ENCODE measurements at regions of chr1 and their contacts with region 1.

Region 1: GRCh38 chr1:24150234-24151174 is 7.6 kb upstream of the IL22RA1 start:
- DNase-seq: peak; percentile 92 to 93
- H3K4me3 ChIP-seq: peak overlapping the region; percentile 25
- H3K4me3 Mint-ChIP-seq: peak overlapping the region; percentile 66
- H3K27ac Mint-ChIP-seq: peak overlapping the region; percentile 86
- H3K4me1 ChIP-seq: peaks cover 13% of the 10 kb centered on the region
- H3K4me1 Mint-ChIP-seq: peaks cover 16% of the 10 kb centered on the region
- H3K27me3 ChIP-seq: no peaks in the 10 kb centered on the region
- H3K27me3 Mint-ChIP-seq: no peaks in the 10 kb centered on the region
- CTCF ChIP-seq: peak; percentile 79 to 81

Region 2: DNA sequence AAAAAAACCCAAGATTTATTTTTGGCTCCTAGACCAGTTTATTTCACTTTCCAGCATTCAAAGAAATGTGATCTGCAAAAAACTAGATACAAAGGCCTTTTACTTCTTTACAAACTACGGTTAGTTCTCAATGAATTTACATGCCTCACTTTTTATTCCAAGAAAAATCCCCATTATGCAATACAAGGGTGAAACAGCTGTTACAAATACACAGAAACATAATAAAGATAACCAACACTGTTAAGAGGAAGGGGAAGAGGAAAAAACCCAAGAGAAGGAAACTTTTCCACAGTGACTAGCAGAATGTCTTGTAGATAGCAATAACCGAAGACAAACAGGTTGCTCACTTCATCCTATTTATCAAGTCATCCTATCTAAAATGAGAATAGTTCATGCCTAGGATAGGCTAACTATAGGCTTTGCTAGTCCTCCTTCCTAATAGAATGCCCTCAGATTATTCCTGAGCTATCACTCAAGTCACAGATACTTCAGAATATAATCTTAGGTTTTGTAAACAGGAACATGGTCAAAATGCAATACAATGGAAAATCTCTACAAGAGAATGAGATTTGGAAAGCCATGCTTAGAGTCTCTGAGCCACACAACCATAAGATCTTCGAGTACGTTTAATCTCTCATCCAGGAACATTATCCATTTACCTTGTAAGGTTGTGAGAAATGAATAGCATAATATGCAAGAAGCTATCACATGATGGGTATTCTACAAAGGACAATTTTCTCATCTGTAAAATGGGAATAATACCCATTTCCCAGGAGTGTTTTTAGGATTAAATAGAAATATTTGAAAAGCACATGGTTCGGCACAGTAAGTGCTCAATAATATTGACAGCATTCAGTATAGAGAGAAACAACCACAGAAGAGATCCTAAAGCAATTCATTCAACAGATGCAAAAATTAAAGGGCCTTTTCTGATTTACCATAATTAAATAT is 185.4 kb before region 1 on chr1:
- CTCF ChIA-PET with region 1: no interaction called
- POLR2A ChIA-PET with region 1: no interaction called
- intact Hi-C with region 1: no loop called
- DNase-seq: no peak
- H3K4me3 ChIP-seq: no peak overlapping the region
- H3K4me3 Mint-ChIP-seq: no peak overlapping the region
- H3K27ac Mint-ChIP-seq: no peak overlapping the region
- H3K4me1 ChIP-seq: peaks cover 12% of the 10 kb centered on the region; the same call in 1 of the 2 replicates
- H3K4me1 Mint-ChIP-seq: no peaks in the 10 kb centered on the region
- H3K27me3 ChIP-seq: no peaks in the 10 kb centered on the region
- H3K27me3 Mint-ChIP-seq: no peaks in the 10 kb centered on the region
- CTCF ChIP-seq: no peak

Region 3: GRCh38 chr1:24070821-24071393 is 79.6 kb before region 1 on chr1:
- CTCF ChIA-PET with region 1: interaction called, 11 read pairs
- POLR2A ChIA-PET with region 1: interaction called, 8 read pairs
- intact Hi-C with region 1: no loop called
- DNase-seq: peak; percentile 79 to 85
- H3K4me3 ChIP-seq: no peak overlapping the region
- H3K4me3 Mint-ChIP-seq: no peak overlapping the region
- H3K27ac Mint-ChIP-seq: no peak overlapping the region
- H3K4me1 ChIP-seq: no peaks in the 10 kb centered on the region
- H3K4me1 Mint-ChIP-seq: no peaks in the 10 kb centered on the region
- H3K27me3 ChIP-seq: no peaks in the 10 kb centered on the region
- H3K27me3 Mint-ChIP-seq: no peaks in the 10 kb centered on the region
- CTCF ChIP-seq: peak; percentile 77 to 81

Region 4: GRCh38 chr1:24181619-24182018 is 31.1 kb after region 1 on chr1:
- CTCF ChIA-PET with region 1: interaction called, 4 read pairs
- POLR2A ChIA-PET with region 1: interaction called, 49 read pairs
- intact Hi-C with region 1: loop called (anchors 2 kb)
- DNase-seq: no peak
- H3K4me3 ChIP-seq: no peak overlapping the region
- H3K4me3 Mint-ChIP-seq: no peak overlapping the region
- H3K27ac Mint-ChIP-seq: no peak overlapping the region
- H3K4me1 ChIP-seq: peaks cover 8% of the 10 kb centered on the region; the same call in 1 of the 2 replicates
- H3K4me1 Mint-ChIP-seq: peaks cover 7% of the 10 kb centered on the region
- H3K27me3 ChIP-seq: no peaks in the 10 kb centered on the region
- H3K27me3 Mint-ChIP-seq: no peaks in the 10 kb centered on the region
- CTCF ChIP-seq: no peak

Region 5: DNA sequence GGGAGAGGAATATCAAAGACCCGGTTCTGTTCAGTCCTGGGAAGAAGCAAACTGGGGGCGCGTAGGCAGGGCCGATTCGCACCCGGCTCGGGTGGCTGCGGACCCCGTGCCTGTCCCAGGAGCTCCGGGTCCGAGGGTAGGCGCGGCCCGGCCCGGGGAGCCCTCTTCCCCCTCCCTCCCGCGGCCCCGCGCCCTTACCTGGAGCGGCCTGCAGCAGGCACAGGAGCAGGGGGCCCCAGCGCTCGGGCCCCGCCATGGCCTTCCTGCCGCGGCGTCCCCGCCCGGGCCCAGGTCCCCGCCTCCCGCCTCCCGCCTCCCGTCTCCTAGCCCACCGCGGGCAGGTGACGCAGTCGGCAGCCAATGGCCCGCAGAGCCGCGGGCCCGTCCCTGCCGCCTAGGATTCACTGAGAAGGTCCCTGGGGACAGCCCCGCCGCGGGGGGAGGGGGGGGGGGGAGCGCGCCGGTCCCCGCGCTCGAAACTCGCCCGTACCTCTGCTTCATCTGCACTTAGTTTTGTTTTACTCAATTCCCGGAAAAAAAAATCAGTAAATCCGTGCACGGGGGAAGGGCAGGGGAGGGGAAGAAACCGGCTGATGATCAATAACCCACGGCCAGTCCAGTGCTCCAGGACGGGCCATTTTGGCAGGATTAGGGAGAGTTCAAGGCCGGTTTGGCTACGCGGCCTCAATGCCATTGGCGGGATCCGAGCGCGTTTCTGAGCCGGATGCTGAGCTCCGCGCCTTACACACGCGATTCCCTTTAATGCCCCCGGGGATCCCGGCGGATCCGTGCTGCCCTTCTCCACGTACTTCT is 36.7 kb after region 1 on chr1 and contains the start of gene IFNLR1:
- CTCF ChIA-PET with region 1: interaction called, 16 read pairs
- POLR2A ChIA-PET with region 1: interaction called, 49 read pairs
- intact Hi-C with region 1: loop called (anchors 2 kb)
- DNase-seq: peak; percentile 82
- H3K4me3 ChIP-seq: peak within 1 kb of the TSS; percentile 44
- H3K4me3 Mint-ChIP-seq: peak within 1 kb of the TSS; percentile 82
- H3K27ac Mint-ChIP-seq: peak within 1 kb of the TSS; percentile 77
- H3K4me1 ChIP-seq: peaks cover 8% of the 10 kb centered on the region; the same call in 1 of the 2 replicates
- H3K4me1 Mint-ChIP-seq: peaks cover 7% of the 10 kb centered on the region
- H3K27me3 ChIP-seq: no peaks in the 10 kb centered on the region
- H3K27me3 Mint-ChIP-seq: no peaks in the 10 kb centered on the region
- CTCF ChIP-seq: no peak
- total RNA-seq, gene IFNLR1: 5.4 and 6.1 TPM in 2 replicates

Region 6: DNA sequence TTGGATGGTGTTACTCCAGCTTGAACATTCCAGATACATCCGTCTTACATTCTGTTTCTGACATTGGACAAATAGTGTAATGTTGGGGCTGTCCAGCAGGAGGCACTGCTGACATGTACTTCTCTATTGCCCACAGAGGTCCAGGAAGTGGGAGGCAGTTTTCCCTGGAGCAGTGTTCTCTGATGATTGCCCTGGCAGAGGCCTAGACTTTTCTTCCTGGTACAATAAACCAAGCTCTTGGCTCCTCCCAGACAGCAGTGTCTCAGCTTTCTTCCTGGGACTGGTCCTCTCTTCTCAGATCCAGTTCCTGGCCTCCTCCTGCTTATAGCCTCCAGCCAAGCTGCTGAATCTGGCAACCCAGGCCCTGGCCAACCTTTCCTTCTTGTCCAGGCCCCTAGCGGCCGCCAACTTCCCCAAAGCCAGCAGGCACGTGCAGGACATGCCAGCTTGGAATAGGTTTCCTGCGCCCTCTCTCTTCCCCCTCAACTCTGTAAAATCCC is 51.5 kb after region 1 on chr1:
- CTCF ChIA-PET with region 1: interaction called, 19 read pairs
- POLR2A ChIA-PET with region 1: interaction called, 3 read pairs
- intact Hi-C with region 1: no loop called
- DNase-seq: peak; percentile 70 to 73
- H3K4me3 ChIP-seq: no peak overlapping the region
- H3K4me3 Mint-ChIP-seq: no peak overlapping the region
- H3K27ac Mint-ChIP-seq: no peak overlapping the region
- H3K4me1 ChIP-seq: no peaks in the 10 kb centered on the region
- H3K4me1 Mint-ChIP-seq: no peaks in the 10 kb centered on the region
- H3K27me3 ChIP-seq: no peaks in the 10 kb centered on the region
- H3K27me3 Mint-ChIP-seq: no peaks in the 10 kb centered on the region
- CTCF ChIP-seq: peak; percentile 59 to 77

Region 7: GRCh38 chr1:24266398-24266941 is 116.0 kb after region 1 on chr1:
- CTCF ChIA-PET with region 1: no interaction called
- POLR2A ChIA-PET with region 1: interaction called, 21 read pairs
- intact Hi-C with region 1: no loop called
- DNase-seq: peak; percentile 30 to 73
- H3K4me3 ChIP-seq: no peak overlapping the region
- H3K4me3 Mint-ChIP-seq: no peak overlapping the region
- H3K27ac Mint-ChIP-seq: no peak overlapping the region
- H3K4me1 ChIP-seq: no peaks in the 10 kb centered on the region
- H3K4me1 Mint-ChIP-seq: no peaks in the 10 kb centered on the region
- H3K27me3 ChIP-seq: no peaks in the 10 kb centered on the region
- H3K27me3 Mint-ChIP-seq: no peaks in the 10 kb centered on the region
- CTCF ChIP-seq: no peak

Region 8: DNA sequence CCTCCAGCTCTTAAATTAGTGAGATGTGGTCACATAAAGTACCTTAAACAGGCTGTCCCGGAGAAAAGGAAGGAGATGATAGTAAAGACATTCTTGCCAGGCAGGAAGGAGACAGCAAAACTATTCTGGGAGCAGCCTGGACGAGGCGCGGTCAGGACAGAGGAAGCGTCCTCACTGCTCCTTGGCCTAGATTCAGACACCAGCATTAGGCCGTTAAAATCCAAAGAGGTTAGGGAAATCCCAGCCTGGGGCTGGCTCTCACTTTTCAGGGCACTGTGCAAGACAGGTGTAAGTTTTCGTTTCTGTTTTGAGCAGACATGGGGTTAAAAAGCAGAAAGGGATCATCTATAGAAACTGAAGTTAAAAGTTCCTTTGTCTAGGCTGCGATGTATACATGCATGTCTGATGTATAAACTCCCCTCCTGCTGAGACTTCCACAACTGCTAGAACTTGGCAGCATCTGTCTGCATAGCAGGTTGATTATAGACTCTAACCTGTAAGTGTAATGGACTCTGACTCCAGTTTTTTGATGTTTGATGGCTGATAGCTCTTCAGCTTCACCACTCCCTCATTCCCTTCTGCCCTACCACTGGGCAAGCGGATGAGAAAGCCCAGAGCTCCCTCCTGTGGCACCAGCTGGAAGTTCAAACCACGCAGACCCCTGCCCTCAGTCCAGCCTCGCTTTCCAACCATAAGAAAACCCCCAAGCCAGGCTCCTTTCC is 241.5 kb after region 1 on chr1:
- CTCF ChIA-PET with region 1: interaction called, 37 read pairs
- POLR2A ChIA-PET with region 1: interaction called, 8 read pairs
- intact Hi-C with region 1: loop called (anchors 1 kb)
- DNase-seq: peak; percentile 58 to 72
- H3K4me3 ChIP-seq: no peak overlapping the region
- H3K4me3 Mint-ChIP-seq: no peak overlapping the region
- H3K27ac Mint-ChIP-seq: peak overlapping the region; percentile 53
- H3K4me1 ChIP-seq: 0 out of 2 replicates have a peak, but pooled peaks cover 12% of the 10 kb centered on the region
- H3K4me1 Mint-ChIP-seq: peaks cover 23% of the 10 kb centered on the region
- H3K27me3 ChIP-seq: no peaks in the 10 kb centered on the region
- H3K27me3 Mint-ChIP-seq: no peaks in the 10 kb centered on the region
- CTCF ChIP-seq: peak; percentile 68 to 85

Region 9: GRCh38 chr1:24421502-24421901 is 271.0 kb after region 1 on chr1:
- CTCF ChIA-PET with region 1: no interaction called
- POLR2A ChIA-PET with region 1: no interaction called
- intact Hi-C with region 1: no loop called
- DNase-seq: no peak
- H3K4me3 ChIP-seq: no peak overlapping the region
- H3K4me3 Mint-ChIP-seq: no peak overlapping the region
- H3K27ac Mint-ChIP-seq: no peak overlapping the region
- H3K4me1 ChIP-seq: peaks cover 9% of the 10 kb centered on the region; the same call in 1 of the 2 replicates
- H3K4me1 Mint-ChIP-seq: peaks cover 10% of the 10 kb centered on the region
- H3K27me3 ChIP-seq: no peaks in the 10 kb centered on the region
- H3K27me3 Mint-ChIP-seq: no peaks in the 10 kb centered on the region
- CTCF ChIP-seq: no peak